ENCODE measurements at regions of chr3 and their contacts with region 1.

Region 1: DNA sequence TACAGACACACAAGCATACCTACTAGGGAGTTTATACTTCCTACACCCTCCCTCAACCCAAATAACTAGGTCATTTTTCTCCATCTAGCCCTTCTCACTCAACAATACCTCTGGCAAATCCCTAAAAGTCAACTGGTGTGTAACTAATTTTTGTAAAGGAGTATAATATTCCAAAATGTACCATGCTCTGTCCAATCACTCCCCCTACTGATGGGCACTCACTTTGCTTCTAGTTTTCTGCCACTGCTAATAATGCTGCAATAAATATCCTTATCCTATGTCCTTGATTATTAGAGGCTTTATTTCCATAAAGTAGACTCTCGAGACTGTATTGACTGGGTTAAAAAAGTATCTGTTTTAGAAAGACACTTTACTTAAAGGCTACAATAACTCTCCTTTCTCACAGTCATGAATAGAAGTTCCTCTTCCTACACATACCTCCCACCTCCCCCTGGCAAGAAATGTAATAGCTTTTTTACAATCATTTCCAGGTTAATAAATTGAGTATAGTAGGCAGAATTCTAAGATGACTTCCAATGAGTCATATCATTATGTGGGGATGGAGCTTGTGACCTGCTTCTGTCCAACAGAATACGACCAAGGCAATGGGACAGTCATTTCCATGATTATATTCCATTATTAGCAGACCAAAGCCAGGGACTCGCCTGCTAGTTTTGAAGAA is 30.0 kb downstream of the SHQ1 start:
- DNase-seq: peak; percentile 13
- H3K4me3 Mint-ChIP-seq: no peak overlapping the region
- H3K27ac Mint-ChIP-seq: no peak overlapping the region
- H3K4me1 Mint-ChIP-seq: peaks cover 19% of the 10 kb centered on the region
- H3K27me3 Mint-ChIP-seq: no peaks in the 10 kb centered on the region

Region 2: GRCh38 chr3:71955240-71956068 is 862.8 kb before region 1 on chr3:
- CTCF ChIA-PET with region 1: no interaction called
- intact Hi-C with region 1: loop called (anchors 2 kb)
- DNase-seq: peak; percentile 76
- H3K4me3 Mint-ChIP-seq: no peak overlapping the region
- H3K27ac Mint-ChIP-seq: peak overlapping the region; percentile 1
- H3K4me1 Mint-ChIP-seq: peaks cover 27% of the 10 kb centered on the region
- H3K27me3 Mint-ChIP-seq: no peaks in the 10 kb centered on the region

Region 3: DNA sequence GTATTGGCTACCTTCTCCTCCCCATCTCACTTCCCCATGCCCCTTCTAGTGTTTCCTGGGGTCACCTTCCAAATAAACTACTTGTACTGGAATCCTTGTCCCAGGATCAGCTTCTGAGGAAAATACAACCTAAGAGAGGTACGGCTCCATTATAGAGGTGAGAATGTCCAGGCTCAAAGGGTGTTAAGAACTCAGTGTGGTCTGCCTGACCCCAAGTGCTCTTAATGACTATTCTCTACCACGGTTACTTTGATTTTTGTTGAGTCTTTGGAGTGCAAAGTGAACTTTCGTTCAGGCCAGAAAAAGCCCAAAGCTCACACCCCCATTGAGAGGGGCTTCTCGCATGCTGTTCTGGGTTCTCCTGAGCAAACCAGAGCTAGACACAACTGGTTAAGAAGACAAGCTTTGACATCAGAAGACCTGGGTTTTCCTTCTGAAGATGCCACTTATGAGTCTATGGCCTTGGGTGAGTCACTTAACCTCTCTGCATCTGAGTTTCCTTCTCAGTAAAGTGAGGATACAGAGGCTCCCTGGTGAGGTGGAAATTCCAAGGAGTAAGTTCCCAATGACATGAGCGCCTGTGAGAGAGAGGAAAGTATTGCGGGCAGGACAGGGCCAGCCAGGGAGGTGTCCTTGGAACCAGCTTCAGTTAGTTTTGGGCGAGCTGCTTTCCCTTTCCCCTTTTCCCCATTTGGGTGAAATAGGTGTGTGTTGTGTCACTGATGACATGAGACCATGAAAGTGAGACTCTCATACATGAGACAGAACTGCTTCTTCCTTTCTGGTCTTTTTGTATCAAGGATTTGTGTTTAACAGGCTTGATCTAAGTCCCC is 558.3 kb before region 1 on chr3:
- CTCF ChIA-PET with region 1: interaction called, 3 read pairs
- intact Hi-C with region 1: loop called (anchors 5 kb)
- DNase-seq: peak; percentile 46
- H3K4me3 Mint-ChIP-seq: no peak overlapping the region
- H3K27ac Mint-ChIP-seq: peak overlapping the region; percentile 82
- H3K4me1 Mint-ChIP-seq: peaks cover 58% of the 10 kb centered on the region
- H3K27me3 Mint-ChIP-seq: no peaks in the 10 kb centered on the region

Region 4: GRCh38 chr3:72447059-72447946 is 370.9 kb before region 1 on chr3:
- CTCF ChIA-PET with region 1: no interaction called
- intact Hi-C with region 1: loop called (anchors 2 kb)
- DNase-seq: peak; percentile 88
- H3K4me3 Mint-ChIP-seq: peak overlapping the region; percentile 54
- H3K27ac Mint-ChIP-seq: no peak overlapping the region
- H3K4me1 Mint-ChIP-seq: peaks cover 37% of the 10 kb centered on the region
- H3K27me3 Mint-ChIP-seq: peaks cover 12% of the 10 kb centered on the region

Region 5: DNA sequence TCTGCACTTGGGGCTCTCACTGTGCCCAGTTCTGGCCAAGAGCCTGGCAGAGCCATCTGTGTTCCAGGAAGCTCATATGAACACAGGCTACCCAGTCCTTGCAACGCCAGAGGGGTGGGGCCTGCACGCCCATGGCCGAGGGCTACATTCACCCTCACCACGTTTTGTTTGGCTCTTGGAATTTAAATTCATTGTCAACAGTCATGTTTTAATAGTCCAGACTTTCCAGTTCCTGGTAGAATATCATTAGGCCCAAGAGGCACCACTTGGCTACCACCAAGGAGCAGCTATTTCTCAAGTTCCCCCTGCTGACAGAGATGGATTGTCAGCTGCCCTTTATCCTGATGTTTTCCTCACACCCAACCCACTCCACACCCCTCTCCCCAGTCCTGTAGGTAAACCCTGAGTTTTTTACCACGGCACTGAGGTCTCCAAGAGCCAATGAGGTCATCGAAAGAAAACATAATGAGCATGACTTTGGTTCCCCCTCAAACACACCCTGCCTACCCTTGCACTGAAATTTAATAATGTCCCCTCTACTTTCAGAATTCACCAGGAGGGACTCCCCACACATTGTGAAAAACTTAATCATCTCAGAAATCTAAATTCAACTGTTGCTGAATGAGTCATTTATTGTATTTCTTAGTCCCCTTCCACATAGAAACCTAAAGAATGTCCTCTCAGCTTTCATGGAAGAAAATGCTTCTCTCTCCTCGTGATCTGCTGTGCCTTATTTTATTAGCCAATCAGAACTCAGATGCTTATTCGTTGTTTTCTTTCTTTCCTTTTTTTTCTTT is 95.1 kb before region 1 on chr3:
- CTCF ChIA-PET with region 1: interaction called, 6 read pairs
- intact Hi-C with region 1: loop called (anchors 1 kb)
- DNase-seq: peak; percentile 27
- H3K4me3 Mint-ChIP-seq: no peak overlapping the region
- H3K27ac Mint-ChIP-seq: no peak overlapping the region
- H3K4me1 Mint-ChIP-seq: peaks cover 17% of the 10 kb centered on the region
- H3K27me3 Mint-ChIP-seq: no peaks in the 10 kb centered on the region

Region 6: DNA sequence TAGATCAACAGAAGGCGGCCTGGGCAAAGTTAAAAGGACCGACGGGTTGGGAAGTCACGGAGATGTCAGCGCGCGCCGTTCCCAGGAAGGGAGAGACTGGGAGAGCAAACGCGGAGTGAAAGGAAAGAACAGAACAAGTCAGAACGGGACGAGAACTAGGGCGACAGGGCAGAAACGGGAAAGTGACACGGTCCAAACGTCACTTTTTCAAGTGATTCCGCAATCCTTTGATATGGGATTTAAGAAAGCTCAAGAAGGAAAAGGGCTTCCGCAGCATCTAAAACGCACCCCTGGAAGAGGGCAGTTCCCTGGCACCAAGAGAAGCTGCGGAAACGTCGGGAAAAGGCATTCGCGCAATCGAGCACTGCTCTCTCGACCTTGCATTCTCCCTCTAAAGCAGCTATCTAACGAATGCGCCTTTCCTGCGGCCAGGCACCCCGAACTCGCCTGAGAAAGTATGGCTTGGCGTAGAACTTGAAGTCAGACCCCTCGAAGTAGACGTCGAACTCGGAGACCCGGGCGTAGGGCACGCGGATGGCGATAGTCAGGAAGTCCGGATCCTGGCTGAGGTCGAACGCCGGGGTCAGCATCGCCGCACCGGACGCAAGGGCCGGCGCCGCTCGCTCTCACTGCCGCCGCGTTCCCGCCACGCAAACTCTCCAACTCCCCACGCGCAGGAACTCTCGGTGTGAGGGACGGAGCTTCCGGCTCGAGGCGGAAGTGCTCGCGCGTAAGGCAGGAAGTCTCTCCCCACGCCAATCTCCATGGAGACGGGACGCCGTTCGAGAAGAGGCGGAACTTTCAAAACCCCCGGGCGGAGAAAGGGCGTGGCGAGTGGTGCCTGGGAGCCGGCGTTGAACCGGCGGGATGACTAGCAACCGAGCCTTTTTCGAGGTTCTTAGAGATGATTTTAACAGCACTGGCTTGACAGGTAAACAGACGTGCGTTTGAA is 29.8 kb after region 1 on chr3 and contains the start of gene SHQ1:
- CTCF ChIA-PET with region 1: interaction called, 3 read pairs
- intact Hi-C with region 1: loop called (anchors 1 kb)
- DNase-seq: peak; percentile 98
- H3K4me3 Mint-ChIP-seq: peak within 1 kb of the TSS; percentile 97
- H3K27ac Mint-ChIP-seq: peak within 1 kb of the TSS; percentile 57
- H3K4me1 Mint-ChIP-seq: peaks cover 47% of the 10 kb centered on the region
- H3K27me3 Mint-ChIP-seq: no peaks in the 10 kb centered on the region
- total RNA-seq, gene SHQ1: 19.9 to 20.5 TPM

Region 7: GRCh38 chr3:74149466-74149865 is 1331.2 kb after region 1 on chr3:
- CTCF ChIA-PET with region 1: no interaction called
- intact Hi-C with region 1: no loop called
- DNase-seq: no peak
- H3K4me3 Mint-ChIP-seq: no peak overlapping the region
- H3K27ac Mint-ChIP-seq: no peak overlapping the region
- H3K4me1 Mint-ChIP-seq: no peaks in the 10 kb centered on the region
- H3K27me3 Mint-ChIP-seq: no peaks in the 10 kb centered on the region